Ovary (tissue), 10 donors: ENCODE measurements at regions of chr2 and their contacts with region 1.

Region 1: DNA sequence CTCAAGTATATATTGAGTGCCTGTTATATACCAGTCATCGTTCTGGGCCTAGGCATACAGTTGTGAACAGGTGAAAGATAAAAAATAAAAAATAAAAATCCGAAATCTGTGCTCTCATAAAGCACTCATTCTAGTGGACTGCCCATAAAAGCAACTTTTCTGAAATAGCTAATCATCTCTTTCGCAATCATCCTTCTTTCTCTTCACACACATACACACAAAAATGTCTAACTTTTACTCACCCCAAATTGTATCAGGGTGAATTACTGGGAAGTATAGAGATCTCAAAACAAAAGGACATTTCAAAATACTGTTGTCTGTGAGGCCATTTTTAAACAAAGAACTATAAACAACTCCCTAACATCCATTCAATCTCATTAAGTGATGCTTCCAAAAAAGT is 29.6 kb upstream of the ORC2 start:
- DNase-seq: no peak
- H3K4me3 ChIP-seq: no peak overlapping the region
- H3K27ac ChIP-seq: no peak overlapping the region
- H3K4me1 ChIP-seq: no peaks in the 10 kb centered on the region
- H3K27me3 ChIP-seq: no peaks in the 10 kb centered on the region
- CTCF ChIP-seq: no peak
- EP300 ChIP-seq: no peak
- POLR2A ChIP-seq: no peak

Region 2: DNA sequence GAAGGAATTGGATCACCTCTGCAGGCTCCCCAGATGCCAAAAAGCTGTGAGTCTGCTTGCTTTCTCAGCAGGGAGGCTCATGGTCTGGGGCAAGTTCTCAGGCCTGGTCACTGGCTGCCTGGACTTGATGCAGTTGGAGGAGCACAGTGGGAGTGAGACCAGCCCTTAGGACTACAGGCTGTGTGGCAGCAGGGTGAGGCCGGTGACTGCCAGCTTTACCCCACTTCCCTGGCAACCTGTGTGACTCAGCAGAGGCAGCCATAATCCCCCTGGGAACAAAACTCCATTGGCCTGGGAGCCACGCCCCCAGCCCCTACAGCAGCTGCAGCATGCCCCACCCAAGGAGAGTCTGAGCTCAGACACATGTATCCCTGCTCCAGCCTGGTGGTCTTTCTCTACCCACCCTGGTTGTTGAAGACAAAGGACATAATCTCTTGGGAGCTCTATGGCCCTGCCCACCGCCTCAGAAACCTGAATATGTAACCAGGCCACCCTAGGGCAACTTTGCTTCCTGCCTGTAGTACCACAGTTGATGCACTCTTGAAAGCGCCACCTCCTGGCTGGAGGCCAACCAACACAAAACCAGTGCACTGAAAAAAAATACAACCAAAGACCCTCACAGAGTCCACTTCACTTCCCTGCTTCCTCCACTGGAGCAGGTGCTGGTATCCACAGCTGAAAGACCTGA is 793.4 kb before region 1 on chr2:
- intact Hi-C with region 1: no loop called
- DNase-seq: no peak
- H3K4me3 ChIP-seq: no peak overlapping the region
- H3K27ac ChIP-seq: no peak overlapping the region
- H3K4me1 ChIP-seq: no peaks in the 10 kb centered on the region
- H3K27me3 ChIP-seq: no peaks in the 10 kb centered on the region
- CTCF ChIP-seq: no peak
- EP300 ChIP-seq: no peak
- POLR2A ChIP-seq: no peak

Region 3: GRCh38 chr2:200929334-200930249 is 63.5 kb before region 1 on chr2:
- intact Hi-C with region 1: loop called in 1 of 4 experiments (anchors 10 kb)
- DNase-seq: no peak
- H3K4me3 ChIP-seq: no peak overlapping the region
- H3K27ac ChIP-seq: no peak overlapping the region
- H3K4me1 ChIP-seq: no peaks in the 10 kb centered on the region
- H3K27me3 ChIP-seq: no peaks in the 10 kb centered on the region
- CTCF ChIP-seq: no peak
- EP300 ChIP-seq: no peak
- POLR2A ChIP-seq: no peak

Region 4: DNA sequence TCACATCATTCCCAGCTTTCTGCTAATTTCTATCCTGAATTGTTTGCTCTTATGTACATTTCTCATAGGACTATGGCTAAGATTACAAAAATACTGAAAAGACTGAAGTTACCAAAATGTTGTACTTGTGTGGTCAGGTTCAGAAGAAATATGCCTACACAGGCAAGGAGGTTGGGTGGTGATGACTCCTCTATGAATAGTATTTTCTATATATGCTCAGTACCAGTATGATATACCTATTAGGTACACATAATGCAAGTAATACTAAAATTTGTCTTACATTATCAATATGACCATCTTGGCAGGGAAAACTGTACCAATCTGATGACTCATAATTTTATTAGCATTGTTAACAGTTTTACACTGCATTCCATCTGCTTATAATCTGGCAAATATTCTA is 17.4 kb before region 1 on chr2:
- intact Hi-C with region 1: no loop called
- DNase-seq: no peak
- H3K4me3 ChIP-seq: no peak overlapping the region
- H3K27ac ChIP-seq: no peak overlapping the region
- H3K4me1 ChIP-seq: no peaks in the 10 kb centered on the region
- H3K27me3 ChIP-seq: no peaks in the 10 kb centered on the region
- CTCF ChIP-seq: no peak
- EP300 ChIP-seq: no peak
- POLR2A ChIP-seq: no peak